ENCODE measurements at regions of chr17 and their contacts with region 1.

Region 1: GRCh38 chr17:68954863-68955841 is at the start of gene ABCA8:
- DNase-seq: no peak
- ATAC-seq: peak in 1 of 4 donors; percentile 64
- H3K4me3 ChIP-seq: peak within 1 kb of the TSS; percentile 53
- H3K27ac ChIP-seq: peak within 1 kb of the TSS; percentile 19
- H3K4me1 ChIP-seq: no peaks in the 10 kb centered on the region
- H3K27me3 ChIP-seq: no peaks in the 10 kb centered on the region
- CTCF ChIP-seq: no peak
- total RNA-seq, gene ABCA8: 8.7 to 25.3 (median 14.4) TPM

Region 2: DNA sequence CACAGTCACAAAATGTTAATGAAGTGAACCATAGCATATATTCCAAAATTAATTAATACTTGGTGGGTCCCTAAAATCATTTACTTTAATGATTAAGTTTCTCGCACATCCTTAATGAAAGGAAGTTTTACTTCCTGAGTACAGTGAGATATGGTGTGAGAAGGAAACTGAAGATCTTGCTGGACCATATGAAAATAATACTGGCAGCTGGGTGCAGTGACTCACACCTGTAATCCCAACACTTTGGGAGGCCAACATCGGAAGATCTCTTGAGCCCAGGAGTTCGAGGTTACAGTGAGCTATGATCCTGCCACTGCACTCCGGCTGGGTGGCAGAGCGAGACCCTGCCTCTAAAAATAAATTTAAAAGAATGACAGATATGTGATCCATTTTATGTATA is 62.5 kb before region 1 on chr17:
- intact Hi-C with region 1: no loop called
- DNase-seq: no peak
- ATAC-seq: no peak
- H3K4me3 ChIP-seq: no peak overlapping the region
- H3K27ac ChIP-seq: no peak overlapping the region
- H3K4me1 ChIP-seq: no peaks in the 10 kb centered on the region
- H3K27me3 ChIP-seq: no peaks in the 10 kb centered on the region
- CTCF ChIP-seq: no peak

Region 3: DNA sequence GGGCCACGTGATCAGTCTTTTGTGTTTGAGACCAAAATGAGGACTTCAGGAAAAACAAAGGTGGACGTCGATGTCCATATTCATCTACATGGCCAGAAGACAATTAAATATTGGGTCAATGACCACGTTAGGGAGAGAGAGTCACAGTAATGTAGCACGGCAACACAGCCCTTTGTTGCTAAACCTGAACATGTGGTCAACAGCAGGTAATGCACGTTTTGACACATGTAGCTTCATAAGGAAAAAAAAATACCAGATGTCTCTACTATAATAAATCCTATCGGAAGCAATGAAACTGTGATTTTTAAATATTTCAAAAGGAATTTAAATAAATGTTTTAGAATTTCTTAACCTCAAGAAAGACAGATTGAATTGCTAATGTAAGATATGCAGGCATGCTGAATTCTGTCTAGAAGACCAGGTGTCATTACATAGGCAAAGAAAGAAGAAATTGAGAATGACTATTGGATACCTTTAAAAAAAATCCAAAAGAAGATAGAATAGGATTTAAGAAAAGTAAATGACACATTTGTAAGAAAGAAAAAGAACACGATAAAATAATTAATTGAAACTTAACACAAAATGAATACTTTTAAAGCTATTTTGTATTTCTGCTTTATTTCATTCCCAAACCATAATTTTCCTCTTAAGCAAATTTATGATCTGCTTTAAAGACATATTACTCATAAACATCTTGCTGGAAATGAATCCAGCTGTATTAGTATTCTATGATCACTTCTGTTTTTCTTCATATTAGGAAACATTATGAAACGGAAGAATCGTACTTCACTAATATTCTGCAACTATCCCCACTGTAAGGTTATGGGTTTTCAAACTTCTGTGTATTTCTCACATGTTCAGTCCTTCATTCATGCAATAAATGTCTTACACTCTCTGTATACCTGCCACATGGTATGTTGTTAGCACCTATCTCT is 30.1 kb before region 1 on chr17:
- intact Hi-C with region 1: loop called in 1 of 2 experiments (anchors 5 kb)
- DNase-seq: no peak
- ATAC-seq: no peak
- H3K4me3 ChIP-seq: no peak overlapping the region
- H3K27ac ChIP-seq: no peak overlapping the region
- H3K4me1 ChIP-seq: no peaks in the 10 kb centered on the region
- H3K27me3 ChIP-seq: no peaks in the 10 kb centered on the region
- CTCF ChIP-seq: no peak